OCI-LY7 (cell line): ENCODE measurements at regions of chr22 and their contacts with region 1.

Region 1: DNA sequence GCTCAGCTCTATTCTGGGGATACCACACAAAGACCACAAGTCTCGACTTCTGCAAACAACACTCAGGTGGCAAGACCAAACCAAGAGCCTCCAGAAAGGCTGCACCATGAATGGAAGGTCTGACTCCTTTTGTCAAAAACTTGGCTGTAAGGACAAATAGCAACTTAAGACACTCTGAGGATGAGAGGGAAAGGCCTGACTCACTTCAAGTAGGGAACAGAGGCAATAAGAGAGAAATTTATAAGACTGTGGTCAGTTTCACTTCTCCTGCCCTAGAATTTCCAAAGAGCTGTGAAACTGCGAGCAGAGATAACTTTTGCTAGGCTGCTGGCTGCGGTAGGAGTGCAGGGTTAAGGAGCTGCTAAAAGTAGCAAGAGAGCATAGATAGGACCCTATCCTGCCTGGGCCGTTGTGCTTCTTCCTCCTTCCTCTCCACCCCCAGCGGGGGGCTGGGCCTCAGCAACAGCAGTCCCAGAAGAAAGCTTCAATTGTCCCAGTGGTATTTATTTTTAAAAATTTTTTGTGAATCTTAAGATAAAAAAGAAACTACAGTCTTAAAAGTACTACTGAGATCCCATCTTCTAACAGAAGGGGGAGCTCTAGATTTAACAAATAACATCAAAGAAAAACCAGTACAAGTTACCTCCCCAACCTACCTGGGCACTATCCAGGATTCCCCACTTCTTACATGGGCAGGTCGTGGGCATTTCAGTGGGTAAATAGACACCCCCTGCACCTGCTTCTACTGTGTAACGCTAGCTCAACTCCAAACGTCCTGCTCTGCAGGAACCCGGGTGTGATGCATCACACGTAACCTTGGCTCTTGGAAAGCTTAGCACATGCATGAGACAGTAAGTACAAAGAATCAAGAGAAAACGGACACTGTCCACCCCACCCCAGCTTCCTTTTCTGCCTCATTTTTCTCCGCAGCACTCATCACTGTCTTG is 66.4 kb downstream of the SGSM3 start:
- DNase-seq: peak; percentile 82
- H3K4me3 ChIP-seq: peak overlapping the region; percentile 64
- H3K27ac ChIP-seq: peak overlapping the region; percentile 99
- H3K4me1 ChIP-seq: peaks cover 96% of the 10 kb centered on the region
- CTCF ChIP-seq: peak; percentile 89

Region 2: DNA sequence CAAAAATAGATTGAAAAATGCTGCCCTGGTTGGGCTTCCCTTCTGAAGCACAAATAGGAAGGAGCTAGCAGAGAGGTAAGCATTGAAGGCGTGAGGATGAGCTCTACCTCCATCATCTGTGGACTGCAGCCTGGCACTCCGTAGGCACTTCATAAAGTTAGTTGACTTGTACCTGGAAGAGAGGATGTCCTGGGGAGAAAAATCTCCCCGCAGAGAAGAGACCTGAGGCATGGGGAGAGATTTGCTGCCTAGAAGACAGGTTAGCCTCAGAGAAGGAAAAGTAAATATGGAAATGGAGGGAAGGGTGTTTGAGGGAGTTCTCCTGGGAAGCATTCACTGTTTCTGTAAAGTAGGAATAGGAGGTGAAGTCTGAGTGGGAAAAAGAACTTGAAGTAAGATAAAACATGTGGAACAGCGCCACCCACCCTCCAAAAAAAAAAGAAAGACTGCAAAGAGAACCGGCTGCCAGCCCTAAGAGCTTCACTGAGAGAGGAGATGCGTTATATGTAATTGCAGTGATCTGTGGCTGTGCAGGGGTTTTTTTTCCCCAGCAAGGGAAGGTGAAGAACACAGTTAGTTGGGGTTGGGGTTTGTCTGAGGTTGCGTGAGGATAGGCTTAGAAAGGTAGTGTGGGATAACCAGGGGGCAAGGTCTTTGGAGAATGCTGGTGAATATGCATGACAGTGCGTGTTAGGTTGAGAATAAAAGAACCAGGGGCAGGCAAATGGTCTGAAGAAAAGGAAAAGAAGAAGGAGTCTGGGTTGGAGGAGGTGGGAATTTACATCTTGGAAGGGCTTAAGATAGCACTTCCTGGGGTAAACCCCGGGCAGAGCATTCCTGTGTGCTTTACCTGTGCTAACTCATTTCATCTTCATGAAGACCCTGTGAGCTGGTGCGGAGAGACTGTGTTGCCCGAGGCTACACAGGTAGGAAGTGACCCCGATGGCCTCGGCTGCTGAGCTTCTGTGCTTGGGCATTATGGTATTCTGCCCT is 243.1 kb before region 1 on chr22:
- CTCF ChIA-PET with region 1: no interaction called
- POLR2A ChIA-PET with region 1: no interaction called
- intact Hi-C with region 1: no loop called
- DNase-seq: no peak
- H3K4me3 ChIP-seq: no peak overlapping the region
- H3K27ac ChIP-seq: no peak overlapping the region
- H3K4me1 ChIP-seq: peaks cover 15% of the 10 kb centered on the region
- CTCF ChIP-seq: peak; percentile 80

Region 3: DNA sequence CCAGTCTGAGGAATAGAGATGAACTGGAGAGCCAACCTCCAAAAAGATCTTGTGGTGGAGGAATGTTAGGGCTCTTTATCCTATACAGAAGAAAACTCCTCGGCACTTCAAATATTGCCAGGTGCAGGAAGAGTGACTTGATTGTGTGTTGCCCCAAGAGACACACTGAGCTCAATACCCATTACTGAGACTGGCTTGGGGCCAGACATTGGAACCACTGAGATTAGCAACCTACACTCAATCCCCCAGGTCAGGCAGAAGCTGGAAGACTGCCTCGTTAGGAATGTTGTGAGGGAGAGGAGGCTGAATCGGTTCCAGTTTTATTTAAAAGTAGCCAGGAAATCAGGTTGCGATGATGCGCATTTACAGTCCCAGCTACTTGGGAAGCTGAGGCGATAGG is 68.8 kb before region 1 on chr22:
- CTCF ChIA-PET with region 1: no interaction called
- POLR2A ChIA-PET with region 1: interaction called, 4 read pairs
- intact Hi-C with region 1: loop called (anchors 2 kb)
- DNase-seq: no peak
- H3K4me3 ChIP-seq: no peak overlapping the region
- H3K27ac ChIP-seq: no peak overlapping the region
- H3K4me1 ChIP-seq: peaks cover 15% of the 10 kb centered on the region
- CTCF ChIP-seq: no peak

Region 4: DNA sequence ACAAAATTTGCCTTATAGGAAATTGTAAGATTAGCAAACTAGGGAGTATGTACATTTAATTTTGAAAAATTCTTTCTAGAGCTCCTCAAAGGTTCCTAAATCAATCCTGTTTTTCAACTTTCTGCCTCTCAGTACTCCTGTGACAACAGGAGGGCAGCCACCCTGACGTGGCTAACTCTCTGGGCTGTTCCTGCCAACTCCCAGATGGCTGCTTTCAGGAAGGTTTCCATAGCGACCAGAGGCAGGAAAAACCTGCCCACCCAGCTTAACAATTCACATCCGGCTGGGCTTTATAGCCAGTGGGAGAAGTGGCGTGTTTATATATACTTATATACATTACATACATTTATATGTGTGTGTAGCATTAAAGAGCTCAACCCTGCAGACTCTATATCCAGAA is 39.9 kb before region 1 on chr22:
- CTCF ChIA-PET with region 1: no interaction called
- POLR2A ChIA-PET with region 1: interaction called, 5 read pairs
- intact Hi-C with region 1: loop called (anchors 1 kb)
- DNase-seq: no peak
- H3K4me3 ChIP-seq: no peak overlapping the region
- H3K27ac ChIP-seq: no peak overlapping the region
- H3K4me1 ChIP-seq: peaks cover 52% of the 10 kb centered on the region
- CTCF ChIP-seq: no peak

Region 5: GRCh38 chr22:40418366-40419201 is 18.2 kb before region 1 on chr22:
- CTCF ChIA-PET with region 1: interaction called, 6 read pairs
- POLR2A ChIA-PET with region 1: interaction called, 17 read pairs
- intact Hi-C with region 1: loop called (anchors 1 kb)
- DNase-seq: peak; percentile 86
- H3K4me3 ChIP-seq: peak overlapping the region; percentile 14
- H3K27ac ChIP-seq: peak overlapping the region; percentile 98
- H3K4me1 ChIP-seq: peaks cover 79% of the 10 kb centered on the region
- CTCF ChIP-seq: no peak

Region 6: DNA sequence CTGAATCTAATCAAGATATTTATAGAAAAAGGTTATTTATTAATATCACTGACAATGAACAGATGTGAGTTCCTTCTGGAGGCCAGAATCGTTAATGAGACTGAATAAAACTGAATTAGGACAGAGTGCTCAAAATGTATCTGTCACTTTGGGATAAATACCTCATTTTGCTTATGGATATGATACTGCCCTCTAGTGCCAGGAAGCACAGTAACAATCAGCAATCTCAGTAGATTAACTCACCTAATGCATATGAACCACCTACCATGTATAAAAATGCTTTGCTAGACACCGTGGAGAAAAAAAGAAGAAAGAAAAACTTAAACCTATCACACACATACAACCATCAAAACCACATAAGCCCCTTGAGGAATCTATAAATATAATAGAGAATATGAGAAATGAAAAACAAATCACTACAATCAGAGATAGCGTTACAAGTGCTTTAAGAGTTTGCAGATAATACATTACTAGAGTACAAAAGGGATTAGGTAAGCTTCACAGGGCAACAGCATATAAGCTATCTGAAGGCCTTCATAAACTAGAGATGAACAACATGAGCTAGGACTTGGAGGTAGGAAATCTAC is 51.0 kb after region 1 on chr22:
- CTCF ChIA-PET with region 1: interaction called, 3 read pairs
- POLR2A ChIA-PET with region 1: interaction called, 6 read pairs
- intact Hi-C with region 1: loop called (anchors 1 kb)
- DNase-seq: peak; percentile 67
- H3K4me3 ChIP-seq: no peak overlapping the region
- H3K27ac ChIP-seq: peak overlapping the region; percentile 40
- H3K4me1 ChIP-seq: peaks cover 48% of the 10 kb centered on the region
- CTCF ChIP-seq: peak; percentile 99

Region 7: DNA sequence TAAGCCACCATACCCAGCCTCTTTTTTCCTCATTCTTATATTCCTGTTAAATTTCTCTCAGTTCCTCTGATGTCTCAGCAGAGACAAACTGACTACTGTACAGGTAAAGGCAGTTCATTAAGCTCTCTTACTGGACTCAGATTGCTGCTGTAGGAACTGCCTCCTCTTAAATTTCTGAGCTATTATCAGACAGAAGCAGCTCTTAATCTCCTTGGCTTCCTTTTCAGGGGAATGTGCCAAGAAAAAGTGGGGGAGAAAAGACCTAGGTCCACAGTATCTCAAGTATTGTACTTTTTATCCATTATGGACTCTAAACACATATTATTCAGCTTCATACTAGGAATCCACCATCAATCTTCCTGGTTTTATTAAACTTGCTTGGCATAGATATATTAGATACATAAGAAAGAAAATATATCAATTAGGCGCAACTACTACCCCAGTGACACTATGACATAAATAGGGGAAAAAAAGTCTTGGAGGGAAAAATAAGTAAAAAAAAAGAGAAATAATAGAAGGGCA is 173.6 kb after region 1 on chr22:
- CTCF ChIA-PET with region 1: no interaction called
- POLR2A ChIA-PET with region 1: no interaction called
- intact Hi-C with region 1: no loop called
- DNase-seq: no peak
- H3K4me3 ChIP-seq: no peak overlapping the region
- H3K27ac ChIP-seq: no peak overlapping the region
- H3K4me1 ChIP-seq: no peaks in the 10 kb centered on the region
- CTCF ChIP-seq: no peak

Region 8: DNA sequence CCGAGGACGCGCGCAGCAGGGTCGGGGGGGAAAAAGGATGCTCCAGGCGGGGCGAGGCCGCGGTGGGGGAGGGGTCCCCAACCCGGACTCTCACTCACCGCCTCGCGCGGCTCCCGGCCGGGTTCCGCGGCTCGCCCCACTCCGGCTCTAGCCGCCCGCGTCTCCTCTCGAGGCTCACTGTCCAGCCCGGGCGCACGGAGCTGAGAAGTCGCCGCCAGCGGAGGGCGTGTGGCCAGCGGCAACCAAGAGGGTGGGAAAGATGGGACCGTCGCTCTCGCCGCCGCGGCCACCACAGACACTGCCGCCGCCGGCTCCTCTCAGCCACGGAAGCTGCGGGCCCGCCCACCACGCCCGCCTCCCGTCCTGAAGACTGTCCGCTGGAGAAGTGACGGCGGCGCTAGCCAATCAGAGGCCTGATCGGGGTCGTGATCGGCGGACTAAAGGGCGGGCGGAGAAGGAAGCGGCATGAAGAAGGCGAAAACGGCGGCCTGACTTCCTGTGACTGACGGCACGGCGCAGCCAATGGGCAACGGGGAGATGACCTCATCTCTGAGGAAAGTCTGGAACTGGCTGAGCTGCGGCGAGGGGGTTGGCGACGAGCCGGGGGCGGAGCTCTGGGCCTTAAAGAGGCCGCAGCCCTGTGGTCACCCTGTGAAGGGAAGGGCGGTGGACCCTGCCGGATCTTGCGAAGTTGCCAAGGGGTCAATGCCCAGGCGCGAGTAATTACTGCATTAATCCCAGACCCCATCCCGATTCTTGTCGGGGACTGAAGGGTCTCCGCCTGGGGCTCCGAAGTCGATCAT is 199.8 kb after region 1 on chr22 and contains the start of gene MRTFA:
- CTCF ChIA-PET with region 1: no interaction called
- POLR2A ChIA-PET with region 1: no interaction called
- intact Hi-C with region 1: loop called (anchors 2 kb)
- DNase-seq: peak; percentile 99
- H3K4me3 ChIP-seq: peak within 1 kb of the TSS; percentile 83
- H3K27ac ChIP-seq: peak within 1 kb of the TSS; percentile 35
- H3K4me1 ChIP-seq: peaks cover 21% of the 10 kb centered on the region
- CTCF ChIP-seq: no peak
- total RNA-seq, gene MRTFA: 25.6 and 47.7 TPM in 2 replicates

Region 9: GRCh38 chr22:40694411-40694810 is 257.6 kb after region 1 on chr22:
- CTCF ChIA-PET with region 1: no interaction called
- POLR2A ChIA-PET with region 1: no interaction called
- intact Hi-C with region 1: no loop called
- DNase-seq: no peak
- H3K4me3 ChIP-seq: no peak overlapping the region
- H3K27ac ChIP-seq: no peak overlapping the region
- H3K4me1 ChIP-seq: no peaks in the 10 kb centered on the region
- CTCF ChIP-seq: no peak

Region 10: DNA sequence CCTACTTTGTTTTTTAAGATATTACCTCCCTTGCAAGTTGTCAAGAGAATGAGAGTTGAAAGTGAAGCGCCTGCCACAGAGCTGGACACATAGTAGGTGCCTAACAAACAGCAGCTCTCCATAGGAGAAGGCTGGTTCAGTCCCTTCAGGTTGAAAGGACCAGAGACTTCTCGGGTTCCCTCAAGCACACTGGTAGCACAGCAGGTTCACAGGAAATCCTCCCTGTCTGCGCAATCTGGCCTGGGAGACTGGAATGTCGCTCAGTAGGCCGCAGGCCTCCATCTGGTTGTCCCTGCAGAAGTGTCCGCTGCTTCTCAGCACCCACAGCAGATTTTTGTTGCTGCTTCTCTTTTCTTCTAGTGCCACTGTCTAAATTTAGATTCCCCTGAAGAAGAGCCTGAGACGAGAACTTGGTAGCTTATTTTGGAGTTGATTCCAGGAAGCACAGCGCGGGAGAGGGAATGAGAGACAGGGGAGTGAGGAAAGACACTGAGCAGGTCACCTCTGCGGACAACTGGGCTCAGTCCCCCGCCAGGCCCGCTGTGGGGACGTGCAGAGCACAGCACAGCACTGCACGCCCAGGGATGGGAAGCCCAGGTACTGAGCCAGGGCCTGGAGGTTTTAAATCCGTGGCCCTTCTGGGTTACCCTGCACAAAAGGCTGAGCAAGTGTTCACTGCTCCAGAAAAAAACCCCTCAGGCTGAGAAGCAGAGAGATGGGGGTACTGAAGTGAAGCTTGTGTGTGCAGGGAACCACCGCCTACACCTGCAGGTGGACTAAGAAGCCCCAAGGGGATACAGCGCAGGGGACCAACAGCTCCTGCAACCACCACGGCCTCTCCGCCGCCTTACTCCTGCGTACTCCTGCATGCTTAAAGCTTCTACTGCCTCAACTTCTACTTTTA is 546.0 kb after region 1 on chr22:
- CTCF ChIA-PET with region 1: no interaction called
- POLR2A ChIA-PET with region 1: no interaction called
- intact Hi-C with region 1: no loop called
- DNase-seq: peak; percentile 88
- H3K4me3 ChIP-seq: peak overlapping the region; percentile 4
- H3K27ac ChIP-seq: peak overlapping the region; percentile 38
- H3K4me1 ChIP-seq: peaks cover 14% of the 10 kb centered on the region
- CTCF ChIP-seq: no peak